HEK293 (cell line): ENCODE measurements at regions of chr19 and their contacts with region 1.

Region 1: DNA sequence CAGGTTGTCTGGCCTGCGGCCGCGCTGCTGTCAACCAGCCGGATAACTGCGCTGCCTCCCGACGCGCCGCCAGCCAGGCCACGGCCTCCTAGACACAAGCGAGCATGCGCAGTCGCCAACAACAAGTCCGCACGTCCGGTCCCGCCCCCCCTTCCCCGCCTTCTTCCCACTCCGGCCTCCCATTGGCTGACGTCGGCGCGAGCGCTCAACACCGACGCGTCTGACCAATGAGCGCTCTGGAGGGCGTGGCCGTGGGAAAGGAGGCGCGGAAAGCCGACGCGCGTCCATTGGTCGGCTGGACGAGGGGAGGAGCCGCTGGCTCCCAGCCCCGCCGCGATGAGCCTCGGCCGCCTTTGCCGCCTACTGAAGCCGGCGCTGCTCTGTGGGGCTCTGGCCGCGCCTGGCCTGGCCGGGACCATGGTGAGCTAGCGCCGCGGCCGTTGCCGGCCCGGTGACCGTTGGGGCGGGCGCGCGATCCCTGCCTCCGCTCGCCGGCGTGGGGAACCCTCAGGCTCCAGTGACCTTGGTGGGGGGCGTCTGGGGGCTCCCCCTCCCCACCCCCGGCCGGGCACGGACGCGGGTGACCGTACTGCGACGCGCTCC is at the start of gene GPX4:
- H3K4me3 ChIP-seq: peak within 1 kb of the TSS; percentile 65
- H3K27ac ChIP-seq: peak within 1 kb of the TSS; percentile 92
- H3K4me1 ChIP-seq: no peaks in the 10 kb centered on the region; the same call in 1 of the 2 replicates
- CTCF ChIP-seq: no peak

Region 2: GRCh38 chr19:1082172-1082927 is 21.5 kb before region 1 on chr19:
- CTCF ChIA-PET with region 1: interaction called, 3 read pairs
- POLR2A ChIA-PET with region 1: interaction called, 16 read pairs
- H3K4me3 ChIP-seq: no peak overlapping the region
- H3K27ac ChIP-seq: no peak overlapping the region
- H3K4me1 ChIP-seq: no peaks in the 10 kb centered on the region
- CTCF ChIP-seq: no peak

Region 3: GRCh38 chr19:1161716-1162115 is 57.9 kb after region 1 on chr19:
- CTCF ChIA-PET with region 1: no interaction called
- POLR2A ChIA-PET with region 1: interaction called, 10 read pairs
- H3K4me3 ChIP-seq: no peak overlapping the region
- H3K27ac ChIP-seq: no peak overlapping the region
- H3K4me1 ChIP-seq: 0 out of 2 replicates have a peak, but pooled peaks cover 2% of the 10 kb centered on the region
- CTCF ChIP-seq: no peak